Endothelial cell of umbilical vein (primary cell): ENCODE measurements at regions of chr6 and their contacts with region 1.

Region 1: DNA sequence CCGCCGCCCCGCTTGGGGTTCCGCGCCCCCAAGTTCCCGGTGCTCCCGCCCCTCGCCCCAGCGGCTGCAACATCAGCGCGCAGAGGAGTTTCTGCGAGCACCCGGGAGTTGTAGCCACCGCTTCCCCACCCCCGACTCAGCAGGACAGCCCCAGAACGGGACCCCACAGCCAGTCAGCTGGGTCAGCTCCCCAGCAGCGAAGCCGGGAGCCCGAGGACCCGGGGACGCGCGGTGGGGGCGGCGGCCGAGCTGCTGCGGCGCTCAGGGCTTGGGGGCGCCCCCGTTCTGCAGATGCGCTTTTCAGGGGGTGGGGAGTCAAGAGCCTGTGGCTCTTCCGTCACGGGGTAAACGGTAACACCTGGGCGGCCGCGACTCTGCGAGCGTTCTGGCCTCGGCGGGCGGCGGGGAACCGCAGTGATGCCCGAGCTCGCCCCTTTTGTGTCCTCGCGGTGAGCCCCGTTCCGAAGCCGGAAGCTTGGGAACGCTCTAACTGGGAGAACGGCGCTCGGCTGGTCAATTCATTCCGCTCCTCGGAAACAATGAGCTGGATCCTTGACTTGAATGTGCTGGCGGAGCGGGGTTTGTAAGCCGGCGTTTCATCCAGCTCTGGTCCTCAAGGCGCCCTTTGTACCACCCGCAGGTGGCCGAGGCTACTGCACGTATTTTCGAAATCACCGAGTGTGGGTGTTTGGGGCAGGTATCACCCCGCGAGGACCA is 774 bp downstream of the PLEKHG1 start:
- DNase-seq: peak; percentile 76
- H3K4me3 ChIP-seq: peak overlapping the region; percentile 68 to 80 (median 70)
- H3K27ac ChIP-seq: peak overlapping the region; percentile 35
- H3K4me1 ChIP-seq: peaks cover 8% of the 10 kb centered on the region
- H3K27me3 ChIP-seq: peaks cover 21 to 31% of the 10 kb centered on the region in 2 experiments
- CTCF ChIP-seq: peak; percentile 43 to 61
- POLR2A ChIP-seq: no peak

Region 2: DNA sequence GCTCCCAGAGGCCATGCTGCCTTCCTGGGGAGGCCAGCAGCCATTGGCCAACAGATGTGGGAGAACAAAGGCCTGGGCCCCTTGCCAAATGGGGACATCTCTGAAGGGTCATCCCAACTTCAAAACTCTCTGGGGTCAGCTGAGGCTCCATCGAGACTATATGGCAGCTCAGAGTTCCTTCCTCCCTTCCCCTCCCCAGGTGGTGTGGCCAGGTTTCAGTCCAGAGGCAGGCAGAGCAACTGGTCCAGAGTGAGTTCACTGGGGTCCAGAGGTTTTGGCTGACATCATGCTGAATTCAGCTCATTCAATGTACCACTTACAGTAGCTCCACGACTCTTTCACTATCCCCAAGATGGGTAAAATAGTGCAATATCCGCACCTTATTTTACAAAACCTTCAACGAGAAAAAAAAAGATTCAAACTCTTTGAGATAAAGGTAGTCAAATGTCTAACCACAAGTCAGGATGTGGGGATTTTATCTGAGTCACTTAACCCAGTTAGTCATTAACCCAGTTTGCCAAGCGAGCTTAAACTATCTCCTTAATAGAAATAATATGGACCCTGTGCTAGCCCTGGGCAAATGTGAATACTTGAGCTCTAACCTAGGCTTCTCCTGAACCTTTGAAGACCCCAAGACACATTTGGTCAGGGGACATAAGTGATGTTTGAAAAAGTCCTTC is 109.2 kb before region 1 on chr6:
- CTCF ChIA-PET with region 1: interaction called, 3 read pairs
- POLR2A ChIA-PET with region 1: no interaction called
- dilution Hi-C with region 1: no loop called
- intact Hi-C with region 1: loop called (anchors 1 kb)
- DNase-seq: no peak
- H3K4me3 ChIP-seq: no peak overlapping the region
- H3K27ac ChIP-seq: no peak overlapping the region
- H3K4me1 ChIP-seq: peaks cover 18% of the 10 kb centered on the region
- H3K27me3 ChIP-seq: no peaks in the 10 kb centered on the region
- CTCF ChIP-seq: no peak
- POLR2A ChIP-seq: no peak

Region 3: DNA sequence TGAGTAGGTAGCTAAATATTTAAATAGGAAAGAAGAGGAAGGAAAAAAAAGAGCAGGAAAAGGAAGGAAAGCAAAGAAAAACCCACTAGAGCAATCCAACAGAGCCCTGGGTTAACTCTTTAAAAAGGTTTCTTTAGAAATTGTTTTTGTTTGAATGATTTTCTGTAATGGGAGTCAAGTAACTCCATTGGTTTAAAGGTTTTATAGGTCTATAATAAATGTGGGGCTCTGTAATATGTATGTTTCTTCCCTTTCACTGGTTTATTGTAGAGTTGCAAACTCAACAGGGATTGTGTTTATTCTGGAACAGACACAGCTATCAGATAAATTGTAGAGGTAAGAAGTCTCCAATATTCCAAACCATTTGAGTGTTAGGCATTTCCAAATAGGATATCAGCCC is 10.1 kb after region 1 on chr6:
- CTCF ChIA-PET with region 1: interaction called, 12 read pairs
- POLR2A ChIA-PET with region 1: interaction called, 3 read pairs
- dilution Hi-C with region 1: no loop called
- intact Hi-C with region 1: no loop called
- DNase-seq: no peak
- H3K4me3 ChIP-seq: no peak overlapping the region
- H3K27ac ChIP-seq: no peak overlapping the region
- H3K4me1 ChIP-seq: peaks cover 4% of the 10 kb centered on the region
- H3K27me3 ChIP-seq: no peaks in the 10 kb centered on the region
- CTCF ChIP-seq: no peak
- POLR2A ChIP-seq: no peak

Region 4: GRCh38 chr6:150617496-150618460 is 17.3 kb after region 1 on chr6:
- CTCF ChIA-PET with region 1: interaction called, 5 read pairs
- POLR2A ChIA-PET with region 1: interaction called, 3 read pairs
- dilution Hi-C with region 1: no loop called
- intact Hi-C with region 1: loop called (anchors 2 kb)
- DNase-seq: peak; percentile 67
- H3K4me3 ChIP-seq: peak overlapping the region in 1 of 3 experiments; percentile 10
- H3K27ac ChIP-seq: peak overlapping the region; percentile 21
- H3K4me1 ChIP-seq: peaks cover 38% of the 10 kb centered on the region
- H3K27me3 ChIP-seq: no peaks in the 10 kb centered on the region
- CTCF ChIP-seq: no peak
- POLR2A ChIP-seq: no peak

Region 5: DNA sequence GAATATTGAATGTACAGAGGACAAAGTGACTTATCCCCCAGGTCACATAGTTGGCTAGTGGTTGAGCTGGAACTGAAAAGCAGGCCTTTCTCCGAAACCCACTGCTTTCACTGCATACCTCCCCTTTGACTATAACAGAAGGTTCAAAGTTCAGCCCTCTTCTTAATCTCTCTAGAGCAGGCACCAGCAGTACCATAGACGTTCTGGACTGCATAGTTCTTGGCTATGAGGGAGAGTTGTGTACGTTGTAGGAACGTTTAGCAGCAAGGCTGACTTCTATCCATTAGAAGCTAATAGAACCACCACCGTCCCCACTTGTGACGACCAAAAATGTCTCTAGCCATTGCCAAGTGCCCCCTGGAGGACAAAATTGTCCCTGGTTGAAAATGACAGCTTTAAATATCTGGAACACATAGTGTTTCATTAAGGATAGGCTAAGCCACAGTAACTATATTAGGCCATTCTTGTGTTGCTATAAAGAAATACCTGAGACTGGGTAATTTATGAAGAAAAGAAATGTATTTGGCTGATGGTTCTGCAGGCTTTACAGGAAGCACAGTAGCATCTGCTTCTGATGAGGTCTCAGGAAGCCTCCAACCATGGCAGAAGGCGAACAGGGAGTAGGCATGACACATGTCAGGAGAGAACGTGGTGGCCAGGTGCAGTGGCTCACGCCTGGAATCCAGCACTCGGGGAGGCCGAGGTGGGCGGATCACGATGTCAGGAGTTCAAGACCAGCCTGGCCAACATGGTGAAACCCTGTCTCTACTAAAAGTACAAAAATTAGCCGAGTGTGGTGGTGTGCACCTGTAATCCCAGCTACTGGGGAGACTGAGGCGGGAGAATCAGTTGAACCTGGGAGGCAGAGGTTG is 141.4 kb after region 1 on chr6:
- CTCF ChIA-PET with region 1: interaction called, 20 read pairs
- POLR2A ChIA-PET with region 1: no interaction called
- dilution Hi-C with region 1: no loop called
- intact Hi-C with region 1: loop called (anchors 10 kb)
- DNase-seq: peak; percentile 31
- H3K4me3 ChIP-seq: no peak overlapping the region
- H3K27ac ChIP-seq: no peak overlapping the region
- H3K4me1 ChIP-seq: no peaks in the 10 kb centered on the region
- H3K27me3 ChIP-seq: no peaks in the 10 kb centered on the region
- CTCF ChIP-seq: peak; percentile 43 to 48
- POLR2A ChIP-seq: no peak

Region 6: GRCh38 chr6:150800674-150801314 is 200.3 kb after region 1 on chr6:
- CTCF ChIA-PET with region 1: no interaction called
- POLR2A ChIA-PET with region 1: no interaction called
- dilution Hi-C with region 1: no loop called
- intact Hi-C with region 1: loop called (anchors 5 kb)
- DNase-seq: no peak
- H3K4me3 ChIP-seq: no peak overlapping the region
- H3K27ac ChIP-seq: no peak overlapping the region
- H3K4me1 ChIP-seq: no peaks in the 10 kb centered on the region
- H3K27me3 ChIP-seq: no peaks in the 10 kb centered on the region
- CTCF ChIP-seq: no peak
- POLR2A ChIP-seq: no peak